ENCODE measurements at regions of chr14 and their contacts with region 1.

Region 1: DNA sequence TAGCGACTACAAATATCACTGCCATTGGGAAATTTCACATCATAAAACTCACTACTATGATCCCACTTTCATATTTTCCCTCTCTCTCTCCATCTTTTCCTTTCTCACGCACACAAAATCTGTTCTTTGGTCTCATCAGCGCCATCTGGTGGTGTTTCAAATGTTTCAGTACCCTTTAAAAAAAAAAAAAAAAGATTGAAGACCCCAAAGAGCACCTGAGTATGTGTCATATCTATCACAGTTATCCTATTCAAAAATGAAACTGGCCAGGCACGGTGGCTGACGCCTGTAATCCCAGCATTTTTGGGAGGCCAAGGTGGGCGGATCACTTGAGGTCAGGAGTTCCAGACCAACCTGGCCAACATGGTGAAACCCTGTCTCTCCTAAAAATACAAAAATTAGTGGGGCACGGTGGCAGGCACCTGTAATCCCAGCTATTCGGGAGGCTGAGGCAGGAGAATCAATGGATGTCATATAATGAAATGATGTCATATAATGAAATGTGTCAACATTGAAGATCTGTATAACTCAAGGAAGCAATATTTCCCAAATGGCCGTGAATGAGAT is 72.4 kb downstream of the TTC9 start:
- DNase-seq: peak; percentile 19 to 69 (median 46)
- H3K4me3 ChIP-seq: no peak overlapping the region
- H3K27ac ChIP-seq: no peak overlapping the region
- H3K4me1 ChIP-seq: peaks cover 0 to 6% of the 10 kb centered on the region in 2 donors
- H3K27me3 ChIP-seq: no peaks in the 10 kb centered on the region
- CTCF ChIP-seq: peak; percentile 60 to 81 (median 69)
- POLR2A ChIP-seq: no peak

Region 2: GRCh38 chr14:70045844-70046535 is 668.1 kb before region 1 on chr14:
- intact Hi-C with region 1: loop called in 1 of 2 experiments (anchors 5 kb)
- DNase-seq: peak; percentile 72 to 89 (median 79)
- H3K4me3 ChIP-seq: no peak overlapping the region
- H3K27ac ChIP-seq: no peak overlapping the region
- H3K4me1 ChIP-seq: no peaks in the 10 kb centered on the region
- H3K27me3 ChIP-seq: no peaks in the 10 kb centered on the region
- CTCF ChIP-seq: peak; percentile 47 to 81 (median 74)
- POLR2A ChIP-seq: no peak

Region 3: DNA sequence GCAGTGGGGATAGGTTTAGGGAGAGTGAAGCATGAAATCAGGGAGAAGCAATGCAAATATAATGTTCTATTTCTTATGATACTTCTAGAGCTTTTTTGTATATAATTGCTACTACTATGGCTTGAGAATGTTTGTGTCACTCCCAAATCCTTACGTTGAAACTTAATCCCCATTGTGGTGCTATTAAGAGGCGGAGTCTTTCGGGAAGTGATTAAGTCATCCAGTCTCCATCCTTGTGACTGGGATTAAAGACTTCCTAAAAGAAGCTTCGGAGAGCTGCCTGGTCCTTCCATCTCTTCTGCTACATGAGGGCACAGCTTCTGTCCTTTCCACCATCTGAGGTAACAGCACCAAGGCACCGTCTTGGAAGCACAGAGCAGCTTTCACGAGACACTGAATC is 435.9 kb before region 1 on chr14:
- intact Hi-C with region 1: no loop called
- DNase-seq: no peak
- H3K4me3 ChIP-seq: no peak overlapping the region
- H3K27ac ChIP-seq: no peak overlapping the region
- H3K4me1 ChIP-seq: no peaks in the 10 kb centered on the region
- H3K27me3 ChIP-seq: no peaks in the 10 kb centered on the region
- CTCF ChIP-seq: no peak
- POLR2A ChIP-seq: no peak

Region 4: GRCh38 chr14:70622111-70622712 is 91.9 kb before region 1 on chr14:
- intact Hi-C with region 1: loop called in 1 of 2 experiments (anchors 5 kb)
- DNase-seq: peak in 4 of 7 donors; percentile 27 to 55 (median 45)
- H3K4me3 ChIP-seq: no peak overlapping the region
- H3K27ac ChIP-seq: no peak overlapping the region
- H3K4me1 ChIP-seq: no peaks in the 10 kb centered on the region
- H3K27me3 ChIP-seq: no peaks in the 10 kb centered on the region
- CTCF ChIP-seq: peak; percentile 19 to 81 (median 64)
- POLR2A ChIP-seq: no peak

Measured in adrenal gland (tissue), 19 donors.